Panc1 (cell line): ENCODE measurements at regions of chr16 and their contacts with region 1.

Region 1: DNA sequence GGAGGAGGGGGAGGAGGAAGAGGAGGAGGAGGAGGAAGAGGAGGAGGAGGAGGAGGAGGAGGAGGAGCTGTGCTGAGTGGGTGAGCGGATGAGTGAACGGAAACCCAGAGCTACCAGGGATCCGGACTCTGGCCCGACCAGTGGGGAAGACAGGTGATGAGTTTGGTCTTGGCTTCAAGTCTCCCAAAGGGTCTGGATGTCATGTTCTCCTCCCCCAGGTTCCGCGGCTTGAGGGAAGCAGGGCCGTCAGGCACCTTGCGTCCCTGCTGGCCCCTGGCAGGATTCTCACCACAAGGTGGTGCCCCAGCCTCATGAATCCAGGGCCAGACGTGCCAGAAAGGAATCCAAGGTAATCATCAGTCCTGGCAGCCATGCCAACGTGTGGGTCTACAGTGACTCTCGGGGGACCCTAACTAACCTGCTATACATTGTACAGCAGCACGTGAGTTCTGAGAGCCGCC is 13.5 kb upstream of the ABAT start:
- DNase-seq: peak; percentile 41
- ATAC-seq: peak; percentile 97
- H3K4me3 ChIP-seq: no peak overlapping the region
- H3K27ac ChIP-seq: no peak overlapping the region
- H3K4me1 ChIP-seq: no peaks in the 10 kb centered on the region
- H3K27me3 ChIP-seq: no peaks in the 10 kb centered on the region
- CTCF ChIP-seq: peak; percentile 87

Region 2: DNA sequence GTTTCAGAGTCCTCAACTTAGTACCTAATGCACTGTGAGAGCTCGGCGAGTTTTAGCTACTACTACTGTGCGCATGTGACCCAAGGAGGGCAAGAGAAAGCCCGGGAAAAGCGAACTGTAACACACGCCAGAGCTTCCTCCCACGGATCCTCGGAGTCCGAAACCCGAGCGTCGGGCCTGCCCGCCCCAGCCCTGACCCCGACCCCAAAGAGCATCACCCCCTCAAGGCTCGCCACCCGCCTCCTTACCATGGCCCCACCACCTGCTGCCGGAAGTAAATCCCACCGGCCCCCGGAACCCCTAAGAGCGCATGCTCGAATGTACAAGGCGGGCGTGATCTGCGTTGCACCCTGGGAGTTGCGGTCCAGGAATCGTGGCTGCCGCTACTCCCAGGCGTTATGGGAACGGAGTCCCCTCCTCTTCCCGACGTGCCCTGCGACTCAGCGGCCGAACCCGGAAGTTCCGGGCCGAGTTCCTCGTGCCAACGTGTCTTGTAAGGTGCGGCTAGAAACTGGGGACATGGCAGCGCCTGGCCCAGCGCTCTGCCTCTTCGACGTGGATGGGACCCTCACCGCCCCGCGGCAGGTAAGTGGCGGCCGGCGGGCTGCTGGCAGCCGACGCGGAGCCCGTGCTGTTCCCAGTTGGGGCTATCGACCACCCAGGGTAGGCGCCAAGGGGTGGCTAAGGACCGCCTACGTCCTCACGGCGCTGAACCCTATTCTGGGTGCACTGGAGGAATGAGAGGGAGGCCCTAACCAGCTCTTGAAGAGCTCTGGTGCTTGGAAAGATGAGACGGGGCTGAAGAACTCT is 136.7 kb after region 1 on chr16 and contains the starts of genes PMM2 and TMEM186:
- CTCF ChIA-PET with region 1: no interaction called
- POLR2A ChIA-PET with region 1: no interaction called
- in situ Hi-C with region 1: no loop called
- intact Hi-C with region 1: loop called (anchors 2 kb)
- DNase-seq: peak; percentile 88
- ATAC-seq: peak; percentile 99
- H3K4me3 ChIP-seq: peak within 1 kb of the TSS; percentile 94 to 99
- H3K27ac ChIP-seq: peak within 1 kb of the TSS; percentile 98
- H3K4me1 ChIP-seq: peaks cover 20% of the 10 kb centered on the region
- H3K27me3 ChIP-seq: no peaks in the 10 kb centered on the region
- CTCF ChIP-seq: no peak
- total RNA-seq, gene PMM2: 58.4 TPM
- total RNA-seq, gene TMEM186: 12.4 TPM

Region 3: DNA sequence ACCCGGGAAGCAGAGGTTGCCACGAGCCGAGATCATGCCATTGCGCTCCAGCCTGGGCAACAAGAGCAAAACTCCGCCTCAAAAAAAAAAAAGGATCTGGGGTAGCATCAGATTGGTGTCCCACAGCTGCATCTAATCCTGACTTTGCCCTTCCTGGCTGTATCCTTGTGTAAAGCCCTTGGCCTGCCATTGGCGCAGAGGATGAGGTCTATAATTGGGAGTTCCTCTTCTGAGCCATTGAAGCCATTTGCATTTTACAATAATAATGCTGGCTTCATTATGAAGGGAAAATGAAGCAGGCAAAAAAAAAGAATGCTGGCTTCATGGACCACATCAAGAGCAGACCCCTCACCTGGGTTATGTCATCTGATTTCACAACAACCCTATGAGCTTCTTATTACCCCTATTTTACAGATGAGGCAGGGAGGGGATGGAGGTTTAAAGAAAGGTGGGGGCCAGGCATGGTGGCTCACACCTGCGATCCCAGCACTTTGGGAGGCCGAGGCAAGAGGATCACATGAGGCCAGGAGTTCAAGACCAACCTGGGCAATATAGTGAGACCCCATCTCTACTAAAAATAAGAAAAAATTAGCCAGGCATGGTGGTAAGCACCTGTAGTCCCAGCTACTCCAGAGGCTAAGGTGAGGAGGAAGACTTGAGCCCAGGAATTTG is 220.1 kb after region 1 on chr16:
- CTCF ChIA-PET with region 1: no interaction called
- POLR2A ChIA-PET with region 1: no interaction called
- in situ Hi-C with region 1: no loop called
- intact Hi-C with region 1: loop called (anchors 1 kb)
- DNase-seq: no peak
- ATAC-seq: no peak
- H3K4me3 ChIP-seq: no peak overlapping the region
- H3K27ac ChIP-seq: no peak overlapping the region
- H3K4me1 ChIP-seq: peaks cover 3% of the 10 kb centered on the region; the same call in 1 of the 2 replicates
- H3K27me3 ChIP-seq: no peaks in the 10 kb centered on the region
- CTCF ChIP-seq: no peak